PC-9 (cell line): ENCODE measurements at regions of chr2 and their contacts with region 1.

Region 1: GRCh38 chr2:14778015-14778414 is 145.5 kb downstream of the LRATD1 start:
- DNase-seq: peak in 1 of 2 experiments; percentile 66
- H3K4me3 ChIP-seq: no peak overlapping the region
- H3K27ac ChIP-seq: peak overlapping the region; percentile 42
- H3K4me1 ChIP-seq: peaks cover 57% of the 10 kb centered on the region
- H3K27me3 ChIP-seq: no peaks in the 10 kb centered on the region
- CTCF ChIP-seq: no peak

Region 2: GRCh38 chr2:14816069-14817060 is 38.4 kb after region 1 on chr2:
- CTCF ChIA-PET with region 1: no interaction called
- POLR2A ChIA-PET with region 1: interaction called, 10 read pairs
- intact Hi-C with region 1: no loop called
- DNase-seq: no peak
- H3K4me3 ChIP-seq: no peak overlapping the region
- H3K27ac ChIP-seq: no peak overlapping the region
- H3K4me1 ChIP-seq: no peaks in the 10 kb centered on the region
- H3K27me3 ChIP-seq: no peaks in the 10 kb centered on the region
- CTCF ChIP-seq: no peak